Activated naive CD4-positive, alpha-beta T cell treated with anti-CD3 and anti-CD28 coated beads for 36 hours (primary cell): ENCODE measurements at regions of chr13 and their contacts with region 1.

Region 1: GRCh38 chr13:77329133-77329910 is 2.4 kb upstream of the MYCBP2 start:
- DNase-seq: peak; percentile 96
- H3K4me3 Mint-ChIP-seq: peak overlapping the region; percentile 92
- H3K27ac Mint-ChIP-seq: peak overlapping the region; percentile 98
- H3K4me1 Mint-ChIP-seq: peaks cover 38% of the 10 kb centered on the region
- H3K27me3 Mint-ChIP-seq: no peaks in the 10 kb centered on the region

Region 2: DNA sequence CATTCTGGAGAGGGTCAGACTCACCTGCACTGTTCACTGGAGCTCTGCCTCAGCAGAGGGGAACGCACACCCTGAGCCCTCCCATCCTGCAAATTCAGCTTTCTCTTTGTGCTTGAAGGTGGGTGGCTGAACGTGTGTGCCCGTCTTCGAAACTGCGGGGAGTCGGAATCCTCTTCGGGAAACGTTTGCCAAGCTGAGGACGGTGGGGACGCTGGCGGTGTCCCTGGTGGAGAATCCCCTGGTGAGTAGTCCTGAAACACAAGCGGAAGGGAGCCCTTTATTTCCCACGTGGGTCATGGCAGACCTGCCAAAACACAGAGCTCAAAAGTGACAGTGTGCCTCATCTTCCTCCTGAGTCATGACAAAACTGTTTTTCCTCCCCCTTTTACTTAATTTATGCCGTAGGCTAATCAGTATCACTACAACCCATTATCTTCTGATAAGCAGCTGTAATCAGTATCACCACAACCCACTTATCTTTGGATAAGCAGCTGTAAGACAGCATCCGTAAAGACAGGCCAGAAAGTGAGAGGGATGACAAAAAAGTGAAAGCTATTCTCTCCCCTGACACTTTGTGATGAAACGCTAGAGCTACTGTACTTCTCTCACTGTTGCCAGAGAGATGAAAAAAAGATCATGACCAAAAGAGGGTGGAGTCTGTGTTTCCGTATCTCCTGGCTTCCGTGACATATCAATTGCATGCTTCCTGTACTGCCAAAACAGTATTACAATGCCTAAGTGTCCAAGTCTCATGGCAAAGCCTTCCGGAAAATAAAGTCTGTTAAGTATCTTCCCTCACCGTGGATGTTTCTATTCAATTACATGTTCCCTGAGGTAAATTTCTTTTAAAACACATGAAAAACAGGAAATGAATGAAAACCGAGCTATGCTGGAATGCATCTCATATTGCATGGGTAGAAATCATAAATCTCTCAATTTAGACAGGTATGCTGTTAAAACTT is 2002.9 kb before region 1 on chr13:
- CTCF ChIA-PET with region 1: no interaction called
- intact Hi-C with region 1: loop called (anchors 10 kb)
- DNase-seq: peak; percentile 83
- H3K4me3 Mint-ChIP-seq: peak overlapping the region; percentile 92
- H3K27ac Mint-ChIP-seq: peak overlapping the region; percentile 98
- H3K4me1 Mint-ChIP-seq: peaks cover 26% of the 10 kb centered on the region
- H3K27me3 Mint-ChIP-seq: no peaks in the 10 kb centered on the region

Region 3: GRCh38 chr13:76886292-76887075 is 442.8 kb before region 1 on chr13 and contains the start of gene KCTD12:
- CTCF ChIA-PET with region 1: no interaction called
- intact Hi-C with region 1: loop called (anchors 2 kb)
- DNase-seq: peak; percentile 70
- H3K4me3 Mint-ChIP-seq: peak within 1 kb of the TSS; percentile 89
- H3K27ac Mint-ChIP-seq: peak within 1 kb of the TSS; percentile 78
- H3K4me1 Mint-ChIP-seq: peaks cover 28% of the 10 kb centered on the region
- H3K27me3 Mint-ChIP-seq: peaks cover 7% of the 10 kb centered on the region
- total RNA-seq, gene KCTD12: 6.2 to 6.4 TPM

Region 4: DNA sequence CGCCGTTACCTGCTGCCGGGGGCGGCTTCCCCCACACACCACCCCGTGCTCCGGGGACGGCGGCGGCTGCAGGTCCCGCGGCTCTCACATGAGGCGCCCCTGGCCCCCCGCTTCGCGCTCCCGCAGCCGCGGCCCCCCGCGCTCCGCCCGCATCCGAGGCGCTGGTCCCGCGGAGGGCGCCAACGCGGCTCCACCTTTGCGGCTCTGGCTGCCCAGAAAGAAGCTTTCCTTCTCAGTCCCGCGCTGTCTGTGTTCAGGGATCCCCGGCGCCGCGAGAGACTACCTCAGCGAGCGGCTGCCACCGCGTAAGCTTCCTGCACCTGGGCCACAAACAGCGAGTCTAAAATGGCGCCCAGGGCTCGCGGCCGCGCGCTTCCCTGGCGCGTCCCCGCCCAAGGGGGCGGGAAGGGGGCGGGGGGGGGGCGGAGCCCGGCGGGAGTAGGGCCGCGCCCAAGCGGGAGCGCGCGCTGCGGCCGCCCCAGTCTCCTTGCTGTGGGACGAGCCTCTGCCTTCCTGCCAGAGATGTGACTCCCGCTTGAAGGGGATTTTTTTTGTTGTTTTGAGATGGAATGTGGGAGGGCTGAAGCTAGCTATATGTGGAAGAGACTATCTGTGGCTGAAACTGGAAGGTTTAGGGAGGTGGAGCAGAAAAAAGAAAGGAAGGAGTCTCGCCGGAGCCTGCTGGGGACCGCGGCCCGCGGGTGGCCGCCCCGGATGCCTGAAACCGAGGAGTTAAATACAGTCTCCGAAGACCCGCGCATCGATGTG is 302.3 kb before region 1 on chr13 and contains the start of gene FBXL3:
- CTCF ChIA-PET with region 1: no interaction called
- intact Hi-C with region 1: loop called (anchors 1 kb)
- DNase-seq: peak; percentile 83
- H3K4me3 Mint-ChIP-seq: peak within 1 kb of the TSS; percentile 91
- H3K27ac Mint-ChIP-seq: peak within 1 kb of the TSS; percentile 93
- H3K4me1 Mint-ChIP-seq: peaks cover 42% of the 10 kb centered on the region
- H3K27me3 Mint-ChIP-seq: no peaks in the 10 kb centered on the region
- total RNA-seq, gene FBXL3: 27.1 to 27.4 TPM

Region 5: DNA sequence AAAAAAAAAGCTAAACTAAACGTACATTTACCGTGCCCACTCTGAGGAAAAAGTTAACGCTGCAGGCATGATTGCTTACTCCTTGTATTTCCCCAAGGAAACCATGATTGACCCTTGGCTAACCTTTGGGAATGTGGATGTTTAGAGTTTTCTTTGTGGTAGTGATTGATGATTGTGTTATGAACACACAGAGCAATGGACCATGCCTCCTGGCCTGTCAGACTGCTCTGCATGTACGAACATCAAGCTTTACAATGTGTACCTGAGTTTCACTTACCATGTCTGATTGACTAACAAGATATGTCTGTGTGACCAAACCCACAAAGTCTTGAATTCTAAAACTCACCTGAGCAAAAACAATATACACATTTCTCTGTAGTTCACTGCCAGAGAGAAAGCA is 37.5 kb before region 1 on chr13:
- CTCF ChIA-PET with region 1: interaction called, 6 read pairs
- intact Hi-C with region 1: loop called (anchors 1 kb)
- DNase-seq: no peak
- H3K4me3 Mint-ChIP-seq: no peak overlapping the region
- H3K27ac Mint-ChIP-seq: peak overlapping the region; percentile 3
- H3K4me1 Mint-ChIP-seq: peaks cover 38% of the 10 kb centered on the region
- H3K27me3 Mint-ChIP-seq: no peaks in the 10 kb centered on the region

Region 6: DNA sequence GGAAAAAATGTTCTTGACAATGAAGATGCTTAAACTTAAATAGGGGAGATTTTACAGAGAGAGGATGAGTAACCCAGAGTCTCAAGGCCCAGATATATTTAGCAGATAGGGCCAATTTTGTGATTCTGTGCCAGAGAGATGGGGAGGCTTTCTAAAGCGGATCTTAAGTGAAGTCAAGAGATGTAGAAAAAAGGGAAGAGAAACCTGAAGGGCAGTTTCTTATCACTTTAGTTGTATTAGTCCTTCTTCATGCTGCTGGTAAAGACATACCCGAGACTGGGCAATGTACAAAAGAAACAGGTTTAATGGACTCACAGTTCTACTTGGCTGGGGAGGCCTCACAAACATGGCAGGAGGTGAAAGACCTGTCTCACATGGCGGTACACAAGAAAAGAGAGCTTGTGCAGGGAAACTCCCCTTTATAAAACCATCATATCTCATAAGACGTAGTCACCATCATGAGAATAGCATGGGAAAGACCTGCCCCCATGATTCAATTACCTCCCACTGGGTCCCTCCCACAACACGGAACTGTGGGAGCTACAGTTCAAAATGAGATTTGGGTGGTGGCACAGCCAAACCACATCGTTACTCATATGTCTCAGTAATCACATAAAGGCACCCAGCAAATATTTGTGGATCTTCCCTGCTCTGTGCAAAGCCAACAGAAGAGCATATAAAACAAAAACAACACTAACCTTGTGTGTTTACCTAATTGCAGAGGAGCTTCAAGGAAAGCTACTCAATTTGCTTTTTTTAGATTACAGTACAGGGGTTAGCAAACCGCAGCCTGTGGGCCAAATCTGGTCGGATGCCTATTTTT is 100.2 kb after region 1 on chr13:
- CTCF ChIA-PET with region 1: no interaction called
- intact Hi-C with region 1: loop called (anchors 1 kb)
- DNase-seq: peak; percentile 48
- H3K4me3 Mint-ChIP-seq: no peak overlapping the region
- H3K27ac Mint-ChIP-seq: no peak overlapping the region
- H3K4me1 Mint-ChIP-seq: peaks cover 10% of the 10 kb centered on the region
- H3K27me3 Mint-ChIP-seq: no peaks in the 10 kb centered on the region

Region 7: GRCh38 chr13:77697217-77698103 is 368.1 kb after region 1 on chr13 and contains the start of gene SLAIN1:
- CTCF ChIA-PET with region 1: no interaction called
- intact Hi-C with region 1: loop called (anchors 1 kb)
- DNase-seq: peak; percentile 79
- H3K4me3 Mint-ChIP-seq: peak within 1 kb of the TSS; percentile 96
- H3K27ac Mint-ChIP-seq: peak within 1 kb of the TSS; percentile 59
- H3K4me1 Mint-ChIP-seq: peaks cover 30% of the 10 kb centered on the region
- H3K27me3 Mint-ChIP-seq: no peaks in the 10 kb centered on the region
- total RNA-seq, gene SLAIN1: 18.0 to 21.7 TPM